Cardiac septum (tissue), 1 donor: ENCODE measurements at regions of chr1 and their contacts with region 1.

Region 1: GRCh38 chr1:25247024-25247828 is at the start of gene RSRP1:
- DNase-seq: peak; percentile 100
- total RNA-seq, gene RSRP1: 52.2 TPM

Region 2: DNA sequence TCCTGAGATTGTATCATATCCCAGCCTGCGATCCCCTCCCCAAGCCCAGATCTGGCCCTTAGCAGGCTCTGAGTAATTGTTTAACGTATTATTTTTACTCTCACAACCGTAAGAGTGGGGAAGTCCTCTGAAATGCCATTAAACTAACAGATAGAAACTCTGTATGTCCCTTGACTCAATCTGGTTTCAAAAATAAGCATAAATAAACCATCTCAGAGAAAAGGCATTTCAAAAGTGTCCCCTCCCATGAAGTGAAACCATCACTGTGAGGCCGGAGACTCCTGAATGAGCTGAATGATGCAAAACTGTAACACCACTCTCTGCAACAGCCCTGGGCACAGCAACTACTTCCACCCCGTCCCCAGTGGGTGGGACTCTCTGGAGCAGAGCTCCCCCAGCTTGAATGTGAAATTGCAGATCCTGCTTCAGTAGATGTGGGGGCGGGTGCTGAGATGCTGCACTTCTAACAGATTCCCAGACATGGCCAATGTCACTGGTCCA is 119.1 kb before region 1 on chr1:
- intact Hi-C with region 1: no loop called
- DNase-seq: no peak

Region 3: GRCh38 chr1:25232027-25232865 is 15.0 kb before region 1 on chr1 and contains the start of gene SYF2:
- intact Hi-C with region 1: loop called (anchors 2 kb)
- DNase-seq: peak; percentile 91
- total RNA-seq, gene SYF2: 35.4 TPM

Region 4: DNA sequence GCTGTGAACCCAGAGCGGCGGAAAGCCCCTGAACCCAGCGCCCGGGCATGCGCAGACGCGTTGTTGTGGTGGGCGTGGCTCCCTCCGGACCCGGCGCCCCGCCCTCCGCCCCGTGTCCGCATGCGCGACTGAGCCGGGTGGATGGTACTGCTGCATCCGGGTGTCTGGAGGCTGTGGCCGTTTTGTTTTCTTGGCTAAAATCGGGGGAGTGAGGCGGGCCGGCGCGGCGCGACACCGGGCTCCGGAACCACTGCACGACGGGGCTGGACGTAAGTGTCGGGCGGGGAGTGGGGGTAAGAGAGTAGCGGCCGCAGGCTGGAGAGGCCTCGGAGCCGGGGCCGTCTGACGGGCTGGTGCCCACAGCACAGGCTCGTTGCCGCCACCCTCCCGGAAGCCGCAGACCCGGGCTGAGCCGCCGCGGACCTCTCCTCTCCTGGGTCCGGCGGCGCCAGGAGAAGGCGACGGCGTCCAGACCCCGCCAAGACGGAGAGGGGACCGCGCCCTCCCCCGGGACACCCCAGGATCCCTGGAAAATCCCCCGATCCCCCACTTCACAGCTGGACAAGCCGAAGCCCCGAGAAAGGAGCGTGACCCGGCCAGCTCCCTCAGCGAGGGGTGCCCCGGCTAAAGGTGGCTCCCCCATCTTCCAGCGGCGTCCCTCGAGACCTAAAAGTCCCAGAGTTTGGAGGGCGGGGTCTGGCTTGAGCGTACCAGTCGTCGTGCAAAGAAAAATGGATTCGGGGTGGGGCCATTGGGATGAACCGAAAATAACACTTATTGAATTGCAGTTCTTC is 91.2 kb after region 1 on chr1 and contains the start of gene TMEM50A:
- intact Hi-C with region 1: loop called (anchors 5 kb)
- DNase-seq: peak; percentile 96
- total RNA-seq, gene TMEM50A: 97.7 TPM

Region 5: GRCh38 chr1:25504706-25505595 is 257.7 kb after region 1 on chr1:
- intact Hi-C with region 1: no loop called
- DNase-seq: no peak

Region 6: DNA sequence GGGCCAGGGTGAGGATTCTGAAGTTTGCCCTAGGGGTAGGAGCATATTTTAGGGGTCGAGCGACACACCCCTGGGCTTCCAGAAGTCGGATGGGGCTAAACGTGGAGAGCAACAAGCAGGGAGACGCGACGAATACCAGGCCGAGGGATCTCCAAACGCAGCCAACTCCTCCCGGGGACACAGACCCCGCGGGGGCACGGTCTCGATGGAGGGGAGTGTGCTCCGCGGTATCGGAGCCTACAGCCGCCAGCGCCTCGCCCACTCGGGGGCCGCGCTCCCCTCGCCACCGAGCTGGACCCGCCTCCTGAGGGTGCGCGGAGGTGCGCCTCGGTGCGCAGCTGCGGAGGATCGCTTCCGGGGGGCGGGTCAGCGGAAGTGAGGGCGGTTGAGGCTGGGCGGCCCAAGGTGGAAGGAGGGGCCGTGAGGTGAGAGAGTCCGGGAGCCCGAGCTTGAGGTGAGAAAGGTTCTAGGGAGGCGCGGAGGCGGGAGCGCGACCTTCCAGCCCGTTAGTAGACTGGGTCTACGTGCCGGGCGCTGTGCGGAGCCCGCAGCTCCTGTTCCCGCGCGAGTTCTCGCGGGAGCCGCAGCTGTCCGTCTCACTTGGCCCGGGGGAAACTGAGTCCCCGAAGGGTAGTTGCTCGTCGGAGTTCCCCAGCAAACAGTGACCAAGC is 572.5 kb after region 1 on chr1 and contains the start of gene MTFR1L:
- intact Hi-C with region 1: loop called (anchors 5 kb)
- DNase-seq: peak; percentile 96
- total RNA-seq, gene MTFR1L: 187 TPM